MCF 10A (cell line): ENCODE measurements at regions of chr5 and their contacts with region 1.

Region 1: DNA sequence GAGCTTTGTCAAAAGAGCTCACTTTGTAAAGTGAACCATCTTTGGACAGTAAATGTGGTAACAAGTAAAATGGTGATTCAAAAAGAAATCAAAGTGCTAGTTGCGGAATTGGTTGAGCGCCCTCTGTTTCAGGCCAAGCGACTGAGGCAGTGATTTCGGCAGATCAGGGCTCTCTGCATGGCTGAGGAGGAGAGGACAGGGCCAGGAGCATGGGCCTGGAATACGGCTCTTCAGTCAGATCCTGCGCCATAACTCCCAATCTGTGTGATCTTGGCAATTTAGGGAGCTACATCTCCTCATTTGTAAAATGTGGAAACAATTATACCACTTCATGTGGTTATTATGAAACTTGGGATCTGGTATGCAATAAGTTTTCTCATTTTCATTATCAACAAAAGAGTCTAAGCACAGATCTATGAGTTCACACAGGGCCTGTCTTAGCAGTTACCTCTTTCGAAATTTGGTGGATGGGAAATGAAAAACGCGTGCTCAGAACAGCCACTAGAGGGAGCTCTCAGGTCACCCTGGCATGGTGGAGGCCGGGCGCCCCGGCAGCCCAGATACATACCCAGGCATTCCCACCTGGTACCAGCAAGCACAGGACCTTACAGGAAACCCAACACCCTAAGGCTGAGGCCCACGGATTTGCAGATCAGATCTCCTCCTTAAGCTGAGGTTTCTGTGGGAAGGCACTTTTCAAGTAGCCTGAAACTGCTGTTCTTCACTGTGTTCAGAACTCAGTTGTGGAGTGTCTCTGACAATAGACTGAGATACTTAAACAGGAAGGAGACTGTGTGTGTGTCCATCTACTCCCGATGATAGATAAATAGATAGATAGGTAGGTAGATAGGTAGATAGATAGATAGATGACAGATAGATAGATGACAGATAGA is 303.7 kb downstream of the RAB3C start:
- DNase-seq: peak; percentile 80
- H3K4me3 Mint-ChIP-seq: no peak overlapping the region
- H3K27ac Mint-ChIP-seq: no peak overlapping the region
- H3K4me1 Mint-ChIP-seq: peaks cover 45% of the 10 kb centered on the region
- H3K27me3 Mint-ChIP-seq: no peaks in the 10 kb centered on the region
- CTCF ChIP-seq: peak; percentile 92

Region 2: DNA sequence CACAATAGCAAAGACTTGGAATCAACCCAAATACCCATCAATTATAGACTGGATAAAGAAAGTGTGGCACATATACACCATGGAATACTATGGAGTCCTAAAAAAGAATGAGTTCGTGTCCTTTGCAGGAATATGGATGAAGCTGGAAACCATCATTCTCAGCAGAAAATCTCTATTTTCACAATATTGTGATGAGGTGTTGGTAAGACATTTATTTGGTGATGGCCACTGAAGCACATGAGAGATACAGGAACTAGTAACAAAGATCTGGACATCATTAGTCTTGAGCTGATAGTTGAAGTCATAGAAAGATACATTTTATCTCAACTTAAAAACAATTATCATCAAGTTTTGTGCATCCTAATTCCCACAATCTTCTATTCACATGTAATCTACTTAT is 233.0 kb before region 1 on chr5:
- CTCF ChIA-PET with region 1: no interaction called
- POLR2A ChIA-PET with region 1: no interaction called
- intact Hi-C with region 1: no loop called
- DNase-seq: no peak
- H3K4me3 Mint-ChIP-seq: no peak overlapping the region
- H3K27ac Mint-ChIP-seq: no peak overlapping the region
- H3K4me1 Mint-ChIP-seq: no peaks in the 10 kb centered on the region
- H3K27me3 Mint-ChIP-seq: peaks cover 73% of the 10 kb centered on the region
- CTCF ChIP-seq: no peak

Region 3: GRCh38 chr5:58902305-58902704 is 15.7 kb after region 1 on chr5:
- CTCF ChIA-PET with region 1: interaction called, 10 read pairs
- POLR2A ChIA-PET with region 1: no interaction called
- intact Hi-C with region 1: no loop called
- DNase-seq: no peak
- H3K4me3 Mint-ChIP-seq: no peak overlapping the region
- H3K27ac Mint-ChIP-seq: no peak overlapping the region
- H3K4me1 Mint-ChIP-seq: no peaks in the 10 kb centered on the region
- H3K27me3 Mint-ChIP-seq: no peaks in the 10 kb centered on the region
- CTCF ChIP-seq: no peak

Region 4: DNA sequence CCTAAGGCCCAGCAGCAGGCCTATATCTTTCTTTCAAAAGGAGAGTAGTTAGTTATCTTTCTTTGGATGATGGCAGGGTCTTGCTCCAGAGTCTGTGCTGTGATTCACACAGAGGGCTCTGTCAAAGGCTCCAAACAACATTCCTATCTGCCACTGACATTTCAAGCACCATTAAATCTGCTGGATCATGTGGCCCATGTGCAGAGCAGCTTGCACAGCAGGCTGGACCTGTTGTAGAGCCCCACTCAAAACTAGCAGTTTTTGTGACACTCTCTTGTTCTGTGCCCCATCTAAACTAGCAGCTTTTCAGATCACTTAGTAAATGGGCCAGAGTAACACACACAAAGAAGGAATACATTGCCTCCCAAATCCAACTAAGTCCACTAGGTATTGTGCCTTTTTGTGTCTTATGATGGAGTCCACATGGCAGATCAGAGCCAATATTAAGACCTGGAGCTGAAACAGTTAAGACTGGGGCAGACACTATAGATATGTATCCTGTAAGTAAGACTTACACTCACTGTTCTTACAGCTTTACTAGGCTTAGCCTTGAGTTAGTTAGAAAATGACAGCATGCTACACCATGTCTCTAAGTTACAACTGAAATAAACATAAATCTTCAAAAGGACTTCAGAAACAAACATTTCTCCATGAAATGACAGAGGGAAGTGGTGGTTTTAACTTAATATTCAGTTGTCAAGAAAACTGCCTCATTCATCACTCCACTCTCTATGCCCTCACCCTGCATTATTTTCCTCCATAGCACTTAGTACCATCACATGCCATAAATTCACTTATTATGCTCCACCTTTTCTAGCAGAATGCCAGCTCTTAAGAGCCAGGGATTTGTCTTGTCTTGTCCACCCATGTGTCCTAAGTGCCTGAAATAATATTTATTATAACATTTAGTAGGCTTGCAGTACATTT is 97.2 kb after region 1 on chr5:
- CTCF ChIA-PET with region 1: interaction called, 19 read pairs
- POLR2A ChIA-PET with region 1: interaction called, 4 read pairs
- intact Hi-C with region 1: no loop called
- DNase-seq: no peak
- H3K4me3 Mint-ChIP-seq: no peak overlapping the region
- H3K27ac Mint-ChIP-seq: no peak overlapping the region
- H3K4me1 Mint-ChIP-seq: peaks cover 15% of the 10 kb centered on the region
- H3K27me3 Mint-ChIP-seq: no peaks in the 10 kb centered on the region
- CTCF ChIP-seq: no peak

Region 5: DNA sequence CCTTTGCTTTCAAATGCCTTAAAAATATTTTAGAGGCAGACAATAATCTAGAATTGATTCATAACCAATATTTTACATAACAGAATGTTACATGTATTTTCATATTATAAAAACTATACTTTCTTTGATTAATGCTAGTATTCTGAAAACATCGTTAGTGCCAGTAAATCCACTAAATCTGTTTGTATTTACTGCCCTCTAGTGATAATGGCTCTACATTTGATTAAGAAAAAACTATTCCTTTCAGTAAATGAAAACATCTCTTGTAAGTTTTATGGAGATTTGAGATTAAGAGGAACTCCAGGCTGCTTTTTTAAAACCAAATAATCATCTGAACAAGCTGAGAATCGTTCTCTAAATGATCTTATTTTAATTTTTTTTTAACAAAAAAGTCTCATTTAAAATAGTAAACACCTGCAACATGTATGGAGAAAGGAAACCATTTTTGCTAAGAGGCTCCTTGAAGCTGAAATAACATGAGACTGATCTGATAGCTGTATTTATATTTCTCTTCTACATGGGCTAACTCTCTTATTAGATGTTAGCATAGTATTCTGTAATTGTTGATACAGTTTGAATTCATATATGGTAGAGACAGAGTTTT is 121.0 kb after region 1 on chr5:
- CTCF ChIA-PET with region 1: interaction called, 149 read pairs
- POLR2A ChIA-PET with region 1: interaction called, 4 read pairs
- intact Hi-C with region 1: loop called (anchors 1 kb)
- DNase-seq: peak; percentile 17
- H3K4me3 Mint-ChIP-seq: no peak overlapping the region
- H3K27ac Mint-ChIP-seq: no peak overlapping the region
- H3K4me1 Mint-ChIP-seq: peaks cover 17% of the 10 kb centered on the region
- H3K27me3 Mint-ChIP-seq: no peaks in the 10 kb centered on the region
- CTCF ChIP-seq: peak; percentile 44

Region 6: DNA sequence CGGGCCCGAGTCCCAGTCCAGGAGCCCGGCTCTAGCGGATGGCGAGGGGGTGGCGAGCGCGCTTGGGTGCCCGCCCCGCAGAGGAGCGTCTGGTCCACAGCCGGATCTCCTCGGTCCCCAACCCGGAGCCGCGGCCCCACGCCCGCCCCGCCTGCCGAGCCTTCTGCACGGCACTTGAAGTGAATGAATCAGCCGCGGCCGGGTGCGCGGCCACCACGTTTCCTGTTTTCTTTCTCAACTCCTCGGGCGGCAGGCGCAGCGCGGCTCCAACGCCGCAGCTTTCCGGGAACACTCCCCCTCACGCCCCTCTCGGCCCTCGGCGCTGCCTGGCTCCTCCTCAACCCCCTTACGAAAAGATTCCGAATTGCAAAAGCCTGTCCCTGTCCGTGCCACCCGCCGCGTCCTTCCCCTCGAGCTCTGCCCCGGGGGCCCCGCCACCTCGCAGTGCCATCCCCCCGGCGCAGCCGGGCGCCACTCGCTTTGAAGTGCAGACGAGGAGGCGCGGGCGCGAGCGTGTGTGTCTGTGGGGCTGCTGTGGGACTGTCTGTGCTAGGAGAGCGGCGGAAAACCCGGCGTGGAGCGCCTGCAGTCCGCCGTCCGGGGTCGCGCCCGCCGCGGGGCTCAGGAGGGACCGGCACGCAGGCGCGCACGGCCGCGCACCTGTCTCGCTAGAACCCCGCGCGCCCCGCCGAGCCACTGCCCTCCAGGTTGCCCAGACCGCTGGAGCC is 152.9 kb after region 1 on chr5:
- CTCF ChIA-PET with region 1: interaction called, 4 read pairs
- POLR2A ChIA-PET with region 1: interaction called, 3 read pairs
- intact Hi-C with region 1: loop called (anchors 1 kb)
- DNase-seq: peak; percentile 89
- H3K4me3 Mint-ChIP-seq: peak overlapping the region; percentile 84
- H3K27ac Mint-ChIP-seq: peak overlapping the region; percentile 92
- H3K4me1 Mint-ChIP-seq: peaks cover 36% of the 10 kb centered on the region
- H3K27me3 Mint-ChIP-seq: no peaks in the 10 kb centered on the region
- CTCF ChIP-seq: no peak

Region 7: GRCh38 chr5:59367791-59368394 is 481.3 kb after region 1 on chr5:
- CTCF ChIA-PET with region 1: interaction called, 3 read pairs
- POLR2A ChIA-PET with region 1: no interaction called
- intact Hi-C with region 1: loop called (anchors 10 kb)
- DNase-seq: peak; percentile 77
- H3K4me3 Mint-ChIP-seq: no peak overlapping the region
- H3K27ac Mint-ChIP-seq: no peak overlapping the region
- H3K4me1 Mint-ChIP-seq: no peaks in the 10 kb centered on the region
- H3K27me3 Mint-ChIP-seq: no peaks in the 10 kb centered on the region
- CTCF ChIP-seq: peak; percentile 87